BJ (cell line): ENCODE measurements at regions of chr19 and their contacts with region 1.

Region 1: GRCh38 chr19:45643024-45643926 is 4.1 kb upstream of the EML2 start:
- DNase-seq: no peak
- H3K4me3 ChIP-seq: no peak overlapping the region
- H3K27me3 ChIP-seq: no peaks in the 10 kb centered on the region
- CTCF ChIP-seq: peak; percentile 99

Region 2: GRCh38 chr19:45439569-45440254 is 203.6 kb before region 1 on chr19:
- CTCF ChIA-PET with region 1: interaction called, 20 read pairs
- POLR2A ChIA-PET with region 1: no interaction called
- DNase-seq: no peak
- H3K4me3 ChIP-seq: peak overlapping the region; percentile 53
- H3K27me3 ChIP-seq: no peaks in the 10 kb centered on the region
- CTCF ChIP-seq: peak; percentile 90

Region 3: DNA sequence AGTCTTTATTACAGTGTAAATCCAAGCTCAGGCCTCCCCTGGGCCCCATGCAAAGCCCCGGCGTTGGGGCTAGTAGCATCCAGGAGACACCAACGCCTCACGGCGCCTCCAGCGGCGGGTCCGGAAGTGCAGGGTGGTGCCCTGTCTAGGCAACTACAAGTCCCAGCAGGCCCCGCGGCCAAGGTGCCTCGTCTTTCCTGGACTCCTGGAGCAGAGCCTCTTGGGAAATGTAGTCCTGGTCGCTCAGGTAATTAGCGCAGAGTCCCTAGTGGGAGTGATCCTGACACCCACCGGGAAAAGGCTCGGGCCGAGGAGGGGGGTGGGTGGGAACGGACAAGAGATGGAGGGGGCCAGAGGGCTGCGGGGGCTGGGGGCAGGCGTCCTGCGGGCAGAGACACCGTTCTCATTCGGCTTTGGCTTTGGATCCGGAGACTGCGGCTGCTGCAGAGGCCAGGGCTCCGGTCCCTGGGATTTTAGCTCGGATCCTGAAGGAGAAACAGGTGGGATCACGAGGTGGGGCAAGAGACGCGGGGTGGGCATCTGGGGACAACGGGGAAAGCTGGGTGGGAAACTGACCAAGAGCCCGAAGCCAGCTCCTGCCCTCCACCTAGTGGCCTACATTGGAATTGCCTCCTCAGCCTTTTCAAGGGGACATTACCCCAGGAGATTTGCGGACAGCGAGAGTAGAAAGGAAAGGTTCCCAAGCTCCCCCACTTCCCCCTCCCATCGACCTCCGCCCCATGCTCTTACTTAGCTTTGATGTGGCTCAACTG is 157.8 kb before region 1 on chr19:
- CTCF ChIA-PET with region 1: interaction called, 24 read pairs
- POLR2A ChIA-PET with region 1: no interaction called
- DNase-seq: no peak
- H3K4me3 ChIP-seq: peak overlapping the region; percentile 65
- H3K27me3 ChIP-seq: no peaks in the 10 kb centered on the region
- CTCF ChIP-seq: peak; percentile 91

Region 4: GRCh38 chr19:45542234-45542668 is 101.0 kb before region 1 on chr19:
- CTCF ChIA-PET with region 1: no interaction called
- POLR2A ChIA-PET with region 1: no interaction called
- DNase-seq: no peak
- H3K4me3 ChIP-seq: no peak overlapping the region
- H3K27me3 ChIP-seq: no peaks in the 10 kb centered on the region
- CTCF ChIP-seq: no peak

Region 5: GRCh38 chr19:45577111-45577905 is 66.0 kb before region 1 on chr19:
- CTCF ChIA-PET with region 1: interaction called, 37 read pairs
- POLR2A ChIA-PET with region 1: no interaction called
- DNase-seq: peak; percentile 61
- H3K4me3 ChIP-seq: no peak overlapping the region
- H3K27me3 ChIP-seq: no peaks in the 10 kb centered on the region
- CTCF ChIP-seq: no peak

Region 6: GRCh38 chr19:45601524-45602374 is 41.5 kb before region 1 on chr19 and contains the start of gene GPR4:
- CTCF ChIA-PET with region 1: interaction called, 99 read pairs
- POLR2A ChIA-PET with region 1: no interaction called
- DNase-seq: no peak
- H3K4me3 ChIP-seq: peak within 1 kb of the TSS; percentile 25
- H3K27me3 ChIP-seq: peaks cover 12% of the 10 kb centered on the region
- CTCF ChIP-seq: no peak
- polyA plus RNA-seq, gene GPR4: 0.06 and 0.12 TPM in 2 replicates

Region 7: GRCh38 chr19:45632468-45633196 is 10.6 kb before region 1 on chr19:
- CTCF ChIA-PET with region 1: interaction called, 23 read pairs
- POLR2A ChIA-PET with region 1: interaction called, 3 read pairs
- DNase-seq: no peak
- H3K4me3 ChIP-seq: no peak overlapping the region
- H3K27me3 ChIP-seq: no peaks in the 10 kb centered on the region
- CTCF ChIP-seq: no peak

Region 8: DNA sequence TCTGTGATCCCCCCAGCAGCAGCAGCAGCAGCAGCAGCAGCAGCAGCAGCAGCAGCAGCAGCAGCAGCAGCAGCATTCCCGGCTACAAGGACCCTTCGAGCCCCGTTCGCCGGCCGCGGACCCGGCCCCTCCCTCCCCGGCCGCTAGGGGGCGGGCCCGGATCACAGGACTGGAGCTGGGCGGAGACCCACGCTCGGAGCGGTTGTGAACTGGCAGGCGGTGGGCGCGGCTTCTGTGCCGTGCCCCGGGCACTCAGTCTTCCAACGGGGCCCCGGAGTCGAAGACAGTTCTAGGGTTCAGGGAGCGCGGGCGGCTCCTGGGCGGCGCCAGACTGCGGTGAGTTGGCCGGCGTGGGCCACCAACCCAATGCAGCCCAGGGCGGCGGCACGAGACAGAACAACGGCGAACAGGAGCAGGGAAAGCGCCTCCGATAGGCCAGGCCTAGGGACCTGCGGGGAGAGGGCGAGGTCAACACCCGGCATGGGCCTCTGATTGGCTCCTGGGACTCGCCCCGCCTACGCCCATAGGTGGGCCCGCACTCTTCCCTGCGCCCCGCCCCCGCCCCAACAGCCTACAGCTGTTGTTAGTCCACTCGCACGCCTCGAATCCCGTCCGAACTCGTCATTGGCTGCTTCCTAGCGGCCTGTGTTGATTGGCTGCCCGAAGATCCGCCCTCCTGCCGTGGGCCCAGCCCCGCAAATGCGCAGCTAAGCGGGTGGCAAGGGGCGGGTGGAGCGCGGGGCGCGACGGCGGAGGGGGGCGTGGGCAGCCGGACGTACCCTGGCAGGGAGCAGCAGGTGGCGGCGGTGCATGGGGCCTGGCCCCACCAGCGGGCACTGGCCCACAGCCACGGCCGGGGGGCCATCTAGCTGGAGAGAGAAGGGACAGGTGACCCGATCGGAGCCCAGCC is 127.2 kb after region 1 on chr19:
- CTCF ChIA-PET with region 1: no interaction called
- POLR2A ChIA-PET with region 1: no interaction called
- DNase-seq: peak; percentile 83
- H3K4me3 ChIP-seq: peak overlapping the region; percentile 42
- H3K27me3 ChIP-seq: no peaks in the 10 kb centered on the region
- CTCF ChIP-seq: peak; percentile 91

Region 9: GRCh38 chr19:45913874-45914830 is 270.9 kb after region 1 on chr19 and contains the start of gene NANOS2:
- CTCF ChIA-PET with region 1: no interaction called
- POLR2A ChIA-PET with region 1: no interaction called
- DNase-seq: no peak
- H3K4me3 ChIP-seq: no peak within 1 kb of the TSS
- H3K27me3 ChIP-seq: peaks cover 6% of the 10 kb centered on the region
- CTCF ChIP-seq: no peak
- polyA plus RNA-seq, gene NANOS2: not detected in 2 replicates